Activated CD4-positive, alpha-beta T cell treated with anti-CD3 and anti-CD28 coated beads, Interleukin-2, amount 10 ng/mL, durations not matched to agents 24 days and 14 days (primary cell): ENCODE measurements at regions of chr1 and their contacts with region 1.

Region 1: GRCh38 chr1:36516372-36517325 is 33.9 kb upstream of the CSF3R start:
- DNase-seq: peak; percentile 79
- H3K4me3 Mint-ChIP-seq: no peak overlapping the region
- H3K27ac Mint-ChIP-seq: no peak overlapping the region
- H3K4me1 Mint-ChIP-seq: no peaks in the 10 kb centered on the region
- H3K27me3 Mint-ChIP-seq: no peaks in the 10 kb centered on the region

Region 2: DNA sequence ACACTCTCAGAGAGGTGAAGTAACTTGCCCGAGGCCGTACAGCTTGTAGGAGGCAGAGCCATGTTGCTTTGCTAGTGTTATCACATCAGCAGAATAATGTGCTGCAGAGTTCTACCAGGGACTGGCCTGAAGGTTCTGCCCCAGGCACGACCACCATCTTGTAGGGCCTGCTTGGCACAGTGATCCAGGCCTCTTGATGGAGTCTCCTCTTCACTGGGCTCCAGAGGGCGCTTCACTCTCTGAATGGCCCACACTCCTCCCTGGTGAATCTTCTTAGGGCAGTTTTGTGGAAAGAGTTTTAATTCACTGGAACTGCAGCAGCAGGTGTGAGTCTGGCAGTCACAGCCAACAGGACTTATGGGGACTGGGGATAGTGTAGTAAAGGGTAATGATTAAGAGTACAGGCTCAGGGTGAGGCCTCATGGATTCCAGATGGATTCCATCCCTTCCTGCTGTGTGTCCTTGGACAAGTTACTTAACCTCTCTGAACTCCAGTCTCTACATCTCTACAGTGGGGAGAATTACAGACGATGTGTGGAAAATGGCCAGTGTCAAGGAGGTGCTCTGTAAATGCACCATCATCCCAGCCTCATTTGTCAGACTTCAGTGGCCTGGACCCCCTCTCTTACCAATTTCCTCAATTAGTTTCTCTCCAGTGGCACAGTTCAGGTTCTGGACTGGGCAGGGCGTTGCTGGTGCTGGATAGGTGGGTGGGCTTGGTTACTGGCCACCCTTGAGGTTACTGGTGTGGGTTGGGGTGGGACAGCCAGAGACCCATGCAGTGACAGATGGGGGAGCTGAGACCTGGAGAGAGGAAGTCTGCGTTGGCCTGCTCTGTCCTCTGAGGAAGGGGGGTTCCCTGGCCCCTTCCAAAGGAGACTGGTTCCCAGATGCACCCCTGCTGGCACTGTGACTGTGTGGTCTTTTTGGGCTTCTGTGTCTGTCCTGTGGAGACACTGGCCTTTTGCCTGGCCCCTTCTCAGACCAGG is 12.0 kb after region 1 on chr1:
- intact Hi-C with region 1: no loop called
- DNase-seq: no peak
- H3K4me3 Mint-ChIP-seq: no peak overlapping the region
- H3K27ac Mint-ChIP-seq: no peak overlapping the region
- H3K4me1 Mint-ChIP-seq: no peaks in the 10 kb centered on the region
- H3K27me3 Mint-ChIP-seq: peaks cover 4% of the 10 kb centered on the region

Region 3: GRCh38 chr1:36553591-36554322 is 37.1 kb after region 1 on chr1:
- intact Hi-C with region 1: loop called (anchors 2 kb)
- DNase-seq: peak; percentile 89
- H3K4me3 Mint-ChIP-seq: no peak overlapping the region
- H3K27ac Mint-ChIP-seq: no peak overlapping the region
- H3K4me1 Mint-ChIP-seq: no peaks in the 10 kb centered on the region
- H3K27me3 Mint-ChIP-seq: peaks cover 40% of the 10 kb centered on the region